ENCODE measurements at regions of chr15 and their contacts with region 1.

Region 1: GRCh38 chr15:51904931-51905330 is 66.6 kb downstream of the LEO1 start:
- DNase-seq: no peak
- ATAC-seq: no peak
- H3K4me3 Mint-ChIP-seq: no peak overlapping the region
- H3K27ac Mint-ChIP-seq: no peak overlapping the region
- H3K4me1 Mint-ChIP-seq: no peaks in the 10 kb centered on the region
- H3K27me3 Mint-ChIP-seq: no peaks in the 10 kb centered on the region
- CTCF ChIP-seq: no peak

Region 2: DNA sequence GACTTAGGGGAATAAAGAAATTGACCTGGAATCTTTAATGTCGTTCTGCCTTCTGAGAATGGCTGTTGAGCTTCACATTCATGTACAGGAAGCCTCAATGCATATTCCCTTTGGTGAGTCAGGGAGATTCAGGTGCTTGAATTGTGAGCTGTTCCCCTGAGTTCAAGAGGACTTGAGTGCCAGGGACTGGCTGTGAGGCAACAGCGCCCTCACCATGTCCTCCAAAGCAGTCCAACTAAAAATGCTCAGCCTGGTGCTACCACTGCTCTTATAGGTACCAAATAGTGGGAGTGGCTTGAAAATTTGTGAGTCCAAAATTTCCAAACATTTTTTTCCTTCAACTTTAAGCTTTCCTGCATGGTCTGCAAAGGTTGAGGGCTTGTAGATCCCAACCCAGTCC is 12.6 kb after region 1 on chr15:
- CTCF ChIA-PET with region 1: interaction called, 3 read pairs
- POLR2A ChIA-PET with region 1: interaction called, 11 read pairs
- intact Hi-C with region 1: no loop called
- DNase-seq: no peak
- ATAC-seq: no peak
- H3K4me3 Mint-ChIP-seq: no peak overlapping the region
- H3K27ac Mint-ChIP-seq: no peak overlapping the region
- H3K4me1 Mint-ChIP-seq: no peaks in the 10 kb centered on the region
- H3K27me3 Mint-ChIP-seq: no peaks in the 10 kb centered on the region
- CTCF ChIP-seq: no peak

Region 3: DNA sequence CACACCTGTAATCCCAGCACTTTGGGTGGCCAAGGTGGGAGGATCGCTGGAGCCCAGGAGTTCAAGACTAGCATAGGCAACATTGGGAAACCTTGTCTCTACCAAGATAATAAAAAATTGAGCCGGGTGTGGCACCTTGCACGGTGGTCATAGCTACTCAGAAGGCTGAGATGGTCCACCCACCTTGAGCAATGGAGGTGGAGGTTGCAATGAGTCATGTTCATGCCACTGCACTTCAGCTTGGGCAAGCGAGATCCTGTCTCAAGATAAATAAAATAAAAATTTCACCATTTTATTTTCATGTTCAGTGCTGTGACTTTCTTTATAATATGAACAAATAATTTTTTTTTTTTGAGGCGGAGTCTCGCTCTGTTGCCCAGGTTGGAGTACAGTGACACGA is 126.6 kb after region 1 on chr15:
- CTCF ChIA-PET with region 1: no interaction called
- POLR2A ChIA-PET with region 1: no interaction called
- intact Hi-C with region 1: no loop called
- DNase-seq: no peak
- ATAC-seq: no peak
- H3K4me3 Mint-ChIP-seq: no peak overlapping the region
- H3K27ac Mint-ChIP-seq: no peak overlapping the region
- H3K4me1 Mint-ChIP-seq: peaks cover 19% of the 10 kb centered on the region
- H3K27me3 Mint-ChIP-seq: no peaks in the 10 kb centered on the region
- CTCF ChIP-seq: no peak